CD8-positive, alpha-beta memory T cell (primary cell): ENCODE measurements at regions of chr10 and their contacts with region 1.

Region 1: DNA sequence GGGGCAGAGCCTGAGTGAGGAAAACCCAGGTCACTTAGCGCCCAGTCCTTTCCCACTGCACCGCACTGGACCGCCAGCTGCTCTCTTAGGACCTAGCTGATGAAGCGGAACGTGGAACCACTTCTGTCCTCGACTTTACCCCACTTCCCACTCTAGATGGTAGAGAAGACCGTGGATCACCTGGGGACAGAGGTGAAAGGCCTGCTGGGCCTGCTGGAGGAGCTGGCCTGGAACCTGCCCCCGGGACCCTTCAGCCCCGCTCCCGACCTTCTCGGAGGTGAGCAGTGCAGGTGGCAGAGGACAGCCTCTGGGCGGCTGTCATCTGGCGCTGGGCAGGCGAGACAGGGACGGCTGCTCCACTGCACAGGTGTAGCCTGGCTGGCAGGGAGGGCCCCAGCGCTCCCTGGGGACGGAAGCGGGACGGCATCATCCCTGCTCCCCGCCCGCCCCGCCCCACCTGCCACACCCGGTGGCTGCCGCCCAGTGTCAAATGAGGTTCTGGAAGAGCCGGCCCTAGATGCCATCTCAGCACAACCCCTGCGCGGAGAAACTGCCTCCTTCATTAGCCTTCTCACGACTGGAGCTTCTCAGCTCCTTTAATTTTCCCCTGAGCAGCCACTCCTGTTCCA is 11.7 kb downstream of the PLAC9 start:
- DNase-seq: peak in 3 of 5 donors; percentile 3 to 52 (median 26)
- H3K4me3 ChIP-seq: peak overlapping the region; percentile 25
- H3K4me3 Mint-ChIP-seq: peak overlapping the region; percentile 77 to 91 (median 82)
- H3K27ac ChIP-seq: no peak overlapping the region
- H3K27ac Mint-ChIP-seq: peak overlapping the region; percentile 29 to 85 (median 72)
- H3K4me1 ChIP-seq: peaks cover 14% of the 10 kb centered on the region
- H3K4me1 Mint-ChIP-seq: peaks cover 17 to 23% (median 22%) of the 10 kb centered on the region in 3 donors
- H3K27me3 ChIP-seq: no peaks in the 10 kb centered on the region
- H3K27me3 Mint-ChIP-seq: peaks cover 13 to 14% of the 10 kb centered on the region in 2 donors

Region 2: DNA sequence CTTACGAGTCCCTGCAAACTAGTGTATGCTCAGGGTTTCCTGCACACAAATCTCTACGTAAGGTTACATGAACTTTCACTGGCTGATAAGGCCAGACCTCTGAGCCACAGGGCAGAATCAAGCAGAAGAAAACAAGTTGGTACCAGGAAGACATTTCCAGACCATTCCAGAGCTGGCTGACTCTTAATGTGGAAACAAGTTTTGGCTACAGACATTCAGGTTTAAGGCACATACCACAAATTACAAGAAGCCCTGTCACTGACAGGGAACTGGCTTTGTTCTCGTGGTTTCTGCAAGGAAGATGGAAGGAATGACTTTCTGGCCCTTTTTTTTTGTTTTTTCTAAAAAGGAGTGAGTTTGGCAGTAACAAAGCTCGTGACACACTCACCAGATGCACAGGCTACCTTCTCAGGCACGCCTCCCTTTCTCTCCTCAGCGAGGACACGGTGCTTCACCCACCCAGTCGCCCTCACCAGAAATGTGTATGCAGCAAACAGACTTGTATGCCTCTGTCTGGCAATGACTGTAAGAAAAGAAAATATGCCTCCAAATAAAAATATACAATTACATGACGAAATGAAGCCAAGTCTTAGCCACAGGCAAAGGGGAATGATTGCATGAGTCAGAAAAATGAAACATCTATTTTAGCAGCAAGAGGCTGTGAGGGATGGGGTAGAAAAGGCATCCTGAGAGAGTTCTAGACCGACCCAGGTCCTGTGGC is 11.0 kb after region 1 on chr10:
- CTCF ChIA-PET with region 1: interaction called, 12 read pairs
- POLR2A ChIA-PET with region 1: no interaction called
- DNase-seq: no peak
- H3K4me3 ChIP-seq: no peak overlapping the region
- H3K4me3 Mint-ChIP-seq: no peak overlapping the region
- H3K27ac ChIP-seq: no peak overlapping the region
- H3K27ac Mint-ChIP-seq: peak overlapping the region in 4 of 8 donors; percentile 10 to 87 (median 27)
- H3K4me1 ChIP-seq: no peaks in the 10 kb centered on the region
- H3K4me1 Mint-ChIP-seq: no peaks in the 10 kb centered on the region
- H3K27me3 ChIP-seq: no peaks in the 10 kb centered on the region
- H3K27me3 Mint-ChIP-seq: no peaks in the 10 kb centered on the region

Region 3: DNA sequence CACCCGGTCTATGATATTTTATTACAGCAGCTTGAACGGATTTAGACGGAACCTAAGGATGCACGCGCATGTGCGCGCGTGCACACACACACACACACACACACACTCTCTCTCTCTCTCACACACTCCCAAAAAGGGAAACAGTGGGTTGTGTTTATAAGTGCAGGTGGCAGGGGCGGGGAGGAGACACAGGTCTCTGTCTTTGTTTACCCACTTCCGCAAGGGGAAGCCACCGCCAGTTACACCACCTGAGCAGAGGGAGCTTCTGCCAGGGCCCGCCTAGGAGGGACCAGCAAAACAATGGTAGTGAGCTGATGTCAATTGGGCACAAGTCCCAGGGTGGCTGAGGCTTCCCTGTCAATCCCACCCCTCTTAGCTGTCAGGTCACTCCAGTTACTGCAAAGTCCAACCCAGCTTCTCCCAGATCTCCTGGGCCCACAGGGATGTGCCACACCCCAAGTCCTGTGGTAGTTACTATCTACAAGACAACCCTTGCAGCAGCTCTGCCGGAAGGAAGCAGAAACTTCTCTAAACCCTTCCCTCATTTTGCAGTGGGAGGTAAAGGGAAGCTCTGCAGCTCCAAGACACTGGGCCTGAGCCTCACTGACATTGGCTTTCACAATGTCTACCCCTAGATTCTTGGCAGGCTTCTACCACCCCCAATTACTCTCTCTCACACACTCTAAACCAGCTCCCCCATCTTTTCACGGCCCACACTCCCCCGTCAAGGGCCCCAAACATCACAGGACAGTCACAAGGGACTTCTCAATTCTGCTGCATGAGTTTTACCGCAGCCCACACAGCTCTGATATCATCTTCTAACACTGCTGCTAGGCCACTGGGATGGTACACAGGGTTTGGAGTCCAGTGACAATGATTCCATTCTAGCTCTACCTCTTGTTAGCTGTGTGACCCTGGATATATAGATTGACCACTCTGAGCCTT is 43.6 kb after region 1 on chr10:
- CTCF ChIA-PET with region 1: interaction called, 10 read pairs
- POLR2A ChIA-PET with region 1: interaction called, 10 read pairs
- DNase-seq: peak; percentile 64 to 93 (median 87)
- H3K4me3 ChIP-seq: peak overlapping the region; percentile 54
- H3K4me3 Mint-ChIP-seq: peak overlapping the region; percentile 66 to 87 (median 75)
- H3K27ac ChIP-seq: peak overlapping the region; percentile 72
- H3K27ac Mint-ChIP-seq: peak overlapping the region; percentile 85 to 94 (median 92)
- H3K4me1 ChIP-seq: peaks cover 93% of the 10 kb centered on the region
- H3K4me1 Mint-ChIP-seq: peaks cover 76 to 91% (median 85%) of the 10 kb centered on the region in 3 donors
- H3K27me3 ChIP-seq: no peaks in the 10 kb centered on the region
- H3K27me3 Mint-ChIP-seq: no peaks in the 10 kb centered on the region

Region 4: DNA sequence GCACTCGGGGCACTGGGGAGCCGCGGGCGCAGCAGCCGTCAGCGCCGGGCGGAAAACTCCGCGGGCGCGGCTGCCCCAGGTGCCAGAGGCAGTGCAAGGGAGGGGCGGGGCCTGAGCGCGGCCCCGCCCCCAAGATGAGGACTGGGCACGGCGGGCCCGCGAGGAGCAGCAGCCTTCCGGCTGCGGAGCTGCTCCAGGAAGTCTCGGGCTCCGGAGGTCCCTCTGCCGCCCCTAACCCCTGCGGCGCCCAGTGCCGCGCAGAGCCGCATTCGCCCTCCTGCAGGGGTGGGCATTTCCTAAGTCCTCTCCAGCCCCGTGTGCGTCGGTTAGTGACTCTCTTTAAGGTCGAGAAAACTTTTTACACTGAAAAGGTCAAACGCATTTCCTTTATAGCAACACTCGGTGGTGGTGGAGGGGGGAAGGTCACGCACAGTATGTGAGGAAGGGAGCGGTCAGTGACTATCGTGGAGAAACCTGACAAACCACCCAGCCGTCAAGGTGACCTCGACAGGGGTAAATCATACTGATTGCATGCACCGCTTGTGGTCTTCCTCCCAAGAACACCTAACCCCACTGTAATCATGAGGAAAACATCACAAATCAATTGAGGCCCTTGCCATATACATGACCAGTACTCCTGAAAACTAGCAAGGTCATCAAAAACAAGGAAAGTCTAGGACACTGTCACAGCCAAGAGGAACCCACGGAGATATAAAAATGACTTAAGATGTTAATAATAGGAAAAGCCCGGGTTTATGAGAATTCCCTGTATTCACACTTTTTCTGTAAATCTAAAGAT is 61.5 kb after region 1 on chr10 and contains the start of gene ANXA11:
- CTCF ChIA-PET with region 1: interaction called, 11 read pairs
- POLR2A ChIA-PET with region 1: interaction called, 4 read pairs
- DNase-seq: peak; percentile 81 to 91 (median 81)
- H3K4me3 ChIP-seq: peak within 1 kb of the TSS; percentile 80
- H3K4me3 Mint-ChIP-seq: peak within 1 kb of the TSS; percentile 82 to 97 (median 94)
- H3K27ac ChIP-seq: peak within 1 kb of the TSS; percentile 74
- H3K27ac Mint-ChIP-seq: peak within 1 kb of the TSS; percentile 92 to 97 (median 95)
- H3K4me1 ChIP-seq: peaks cover 50% of the 10 kb centered on the region
- H3K4me1 Mint-ChIP-seq: peaks cover 48 to 55% (median 54%) of the 10 kb centered on the region in 3 donors
- H3K27me3 ChIP-seq: no peaks in the 10 kb centered on the region
- H3K27me3 Mint-ChIP-seq: no peaks in the 10 kb centered on the region
- total RNA-seq, gene ANXA11: 211 to 217 TPM

Region 5: DNA sequence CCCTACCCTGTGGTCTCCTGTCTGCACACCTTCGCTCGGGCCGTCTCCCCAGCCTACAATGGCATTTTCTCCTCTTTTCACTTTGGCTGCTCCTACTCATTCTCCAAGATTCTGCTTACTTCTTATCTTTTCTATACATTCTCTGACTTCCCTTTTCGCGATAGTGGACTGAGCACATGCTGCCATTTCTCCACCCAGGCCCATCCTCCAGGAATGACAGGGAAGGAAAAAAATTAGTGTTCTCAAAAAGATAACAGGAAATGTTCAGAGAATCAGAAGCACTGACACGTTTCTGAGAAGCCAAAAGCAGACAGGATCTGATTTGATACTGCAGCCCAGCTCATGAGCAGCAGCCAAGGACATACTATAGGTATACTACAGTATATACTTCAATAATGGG is 67.6 kb after region 1 on chr10:
- CTCF ChIA-PET with region 1: interaction called, 11 read pairs
- POLR2A ChIA-PET with region 1: interaction called, 3 read pairs
- DNase-seq: no peak
- H3K4me3 ChIP-seq: no peak overlapping the region
- H3K4me3 Mint-ChIP-seq: no peak overlapping the region
- H3K27ac ChIP-seq: no peak overlapping the region
- H3K27ac Mint-ChIP-seq: no peak overlapping the region
- H3K4me1 ChIP-seq: peaks cover 5% of the 10 kb centered on the region
- H3K4me1 Mint-ChIP-seq: peaks cover 0 to 26% (median 13%) of the 10 kb centered on the region in 3 donors
- H3K27me3 ChIP-seq: no peaks in the 10 kb centered on the region
- H3K27me3 Mint-ChIP-seq: no peaks in the 10 kb centered on the region